Naive thymus-derived CD4-positive, alpha-beta T cell (primary cell): ENCODE measurements at regions of chr7 and their contacts with region 1.

Region 1: DNA sequence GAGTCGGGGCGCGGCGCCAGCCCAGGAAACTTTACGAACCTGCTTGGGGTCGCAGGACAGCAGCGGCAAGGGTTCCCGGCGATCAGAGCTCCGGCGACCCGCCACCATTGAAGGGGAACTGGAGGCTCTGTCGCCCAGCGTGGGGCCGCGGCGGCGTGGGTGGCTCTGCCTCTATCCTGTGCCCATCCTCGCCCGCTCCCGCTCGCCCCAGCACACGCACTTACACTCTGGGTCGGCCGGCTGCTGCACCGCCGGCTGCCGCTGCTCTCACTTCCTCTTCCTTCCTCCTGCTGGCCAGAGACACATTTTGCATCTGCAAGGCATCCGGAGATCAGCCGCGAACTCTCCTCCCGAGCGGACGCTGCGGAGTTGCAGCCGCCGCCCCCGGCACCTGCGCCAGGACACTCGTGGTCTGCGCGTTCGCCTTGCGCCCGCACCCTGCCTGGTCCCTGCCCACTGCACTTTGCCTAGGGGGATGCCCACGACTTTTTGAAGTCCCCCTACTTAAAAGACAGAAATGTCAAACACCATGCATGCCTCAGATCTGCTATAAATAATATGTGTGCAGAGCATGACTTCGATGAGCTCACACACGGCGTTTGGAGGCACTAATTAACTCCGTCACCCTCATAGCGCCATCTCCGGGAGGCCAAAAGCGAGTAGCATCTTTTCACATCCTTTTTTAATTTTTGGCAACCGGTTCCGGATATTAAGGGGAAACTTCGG is at the start of gene ELMO1:
- DNase-seq: peak; percentile 63 to 87 (median 86)
- ATAC-seq: peak; percentile 83
- H3K4me3 ChIP-seq: peak within 1 kb of the TSS; percentile 83
- H3K4me3 Mint-ChIP-seq: peak within 1 kb of the TSS; percentile 94 to 99 (median 97)
- H3K27ac ChIP-seq: peak within 1 kb of the TSS; percentile 89
- H3K27ac Mint-ChIP-seq: peak within 1 kb of the TSS; percentile 97 to 100 (median 99)
- H3K4me1 ChIP-seq: peaks cover 8 to 29% of the 10 kb centered on the region in 2 donors
- H3K4me1 Mint-ChIP-seq: peaks cover 21 to 62% (median 54%) of the 10 kb centered on the region in 7 donors
- H3K27me3 ChIP-seq: no peaks in the 10 kb centered on the region
- H3K27me3 Mint-ChIP-seq: peaks cover 0 to 10% (median 0%) of the 10 kb centered on the region in 5 donors
- total RNA-seq, gene ELMO1: 119 to 160 (median 126) TPM

Region 2: DNA sequence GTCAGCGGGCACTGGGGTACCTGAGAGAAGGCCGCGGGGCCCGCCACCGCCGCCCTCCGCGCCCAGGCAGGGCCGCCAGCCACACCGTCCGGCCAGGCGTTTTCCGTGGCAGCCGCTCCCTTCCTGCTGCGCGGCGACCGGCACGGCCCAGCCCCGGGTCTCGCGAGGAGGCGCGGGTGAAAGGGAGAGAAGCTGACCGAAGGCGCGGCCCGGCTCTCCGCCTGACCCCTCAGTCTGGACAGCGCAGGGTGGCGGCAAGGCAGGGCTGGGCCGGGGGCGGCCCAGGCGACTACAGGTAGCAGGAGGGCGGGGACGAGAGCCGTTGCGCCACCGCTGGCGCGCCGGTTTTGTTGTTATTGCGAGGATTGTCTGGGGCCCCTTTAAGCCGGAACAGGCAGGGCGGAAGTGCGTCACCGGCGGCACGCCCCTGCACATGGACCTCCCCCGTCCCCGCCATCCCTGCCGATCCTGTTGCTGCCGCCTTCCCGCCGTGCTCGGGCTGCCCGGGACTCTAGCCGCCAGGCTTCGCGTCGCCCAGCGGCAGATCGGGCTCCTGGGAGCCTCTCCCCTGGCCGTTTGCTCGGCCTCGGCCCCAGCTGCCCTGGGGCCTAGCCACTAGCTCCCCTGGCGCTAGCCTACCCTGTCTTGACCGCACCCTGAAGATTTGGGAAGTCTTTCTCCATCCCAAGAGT is 1753.9 kb before region 1 on chr7 and contains the start of gene HERPUD2:
- CTCF ChIA-PET with region 1: no interaction called
- POLR2A ChIA-PET with region 1: interaction called, 3 read pairs
- intact Hi-C with region 1: loop called in 1 of 2 experiments (anchors 1 kb)
- DNase-seq: peak; percentile 89 to 94 (median 93)
- ATAC-seq: peak; percentile 92
- H3K4me3 ChIP-seq: peak within 1 kb of the TSS; percentile 92
- H3K4me3 Mint-ChIP-seq: peak within 1 kb of the TSS; percentile 88 to 99 (median 97)
- H3K27ac ChIP-seq: peak within 1 kb of the TSS; percentile 98
- H3K27ac Mint-ChIP-seq: peak within 1 kb of the TSS; percentile 93 to 100 (median 98)
- H3K4me1 ChIP-seq: peaks cover 16 to 18% of the 10 kb centered on the region in 2 donors
- H3K4me1 Mint-ChIP-seq: peaks cover 47 to 62% (median 57%) of the 10 kb centered on the region in 7 donors
- H3K27me3 ChIP-seq: no peaks in the 10 kb centered on the region
- H3K27me3 Mint-ChIP-seq: no peaks in the 10 kb centered on the region
- total RNA-seq, gene HERPUD2: 38.1 to 92.6 (median 62.4) TPM

Region 3: DNA sequence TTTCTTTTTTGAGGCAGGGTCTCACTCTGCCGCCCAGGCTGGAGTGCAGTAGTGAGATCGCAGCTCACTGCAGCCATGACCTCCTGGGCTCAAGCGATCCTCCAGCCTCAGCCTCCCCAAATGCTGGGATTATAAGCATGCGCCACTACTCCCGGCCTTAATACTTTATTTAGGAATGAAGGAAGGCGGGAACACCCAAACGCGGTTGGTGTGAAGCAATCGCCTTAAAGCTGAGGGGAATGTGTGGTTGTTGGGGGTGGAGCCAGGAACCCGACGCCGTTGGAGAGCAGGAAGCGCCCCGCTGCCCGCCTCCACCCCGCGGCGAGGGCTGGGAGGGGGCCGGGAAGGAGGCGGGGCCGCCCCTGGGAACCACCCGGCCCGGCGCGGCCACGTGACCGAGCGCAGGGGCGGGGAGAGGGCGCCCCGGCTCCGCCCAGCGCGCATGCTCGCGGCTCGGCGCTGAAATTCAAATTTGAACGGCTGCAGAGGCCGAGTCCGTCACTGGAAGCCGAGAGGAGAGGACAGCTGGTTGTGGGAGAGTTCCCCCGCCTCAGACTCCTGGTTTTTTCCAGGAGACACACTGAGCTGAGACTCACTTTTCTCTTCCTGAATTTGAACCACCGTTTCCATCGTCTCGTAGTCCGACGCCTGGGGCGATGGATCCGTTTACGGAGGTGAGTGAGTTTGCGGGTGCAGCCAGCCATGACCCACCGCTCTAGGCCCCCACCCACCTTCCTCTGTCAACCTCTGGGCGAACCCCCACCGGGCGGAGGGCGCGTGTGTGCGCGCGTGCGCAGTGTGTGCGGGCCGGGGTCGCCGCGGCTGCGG is 1059.2 kb before region 1 on chr7 and contains the start of gene ANLN:
- CTCF ChIA-PET with region 1: no interaction called
- POLR2A ChIA-PET with region 1: no interaction called
- intact Hi-C with region 1: loop called (anchors 5 to 10 kb)
- DNase-seq: peak; percentile 71 to 91 (median 82)
- ATAC-seq: peak; percentile 98
- H3K4me3 ChIP-seq: peak within 1 kb of the TSS; percentile 78
- H3K4me3 Mint-ChIP-seq: peak within 1 kb of the TSS; percentile 77 to 90 (median 85)
- H3K27ac ChIP-seq: peak within 1 kb of the TSS; percentile 67
- H3K27ac Mint-ChIP-seq: peak within 1 kb of the TSS; percentile 72 to 90 (median 81)
- H3K4me1 ChIP-seq: peaks cover 8 to 19% of the 10 kb centered on the region in 2 donors
- H3K4me1 Mint-ChIP-seq: peaks cover 12 to 39% (median 26%) of the 10 kb centered on the region in 7 donors
- H3K27me3 ChIP-seq: no peaks in the 10 kb centered on the region
- H3K27me3 Mint-ChIP-seq: peaks cover 0 to 12% (median 0%) of the 10 kb centered on the region in 5 donors
- total RNA-seq, gene ANLN: 0.35 to 48.6 (median 0.82) TPM

Region 4: GRCh38 chr7:37234928-37235327 is 213.9 kb before region 1 on chr7:
- CTCF ChIA-PET with region 1: no interaction called
- POLR2A ChIA-PET with region 1: interaction called, 3 read pairs
- intact Hi-C with region 1: loop called in 1 of 2 experiments (anchors 1 kb)
- DNase-seq: peak in 6 of 9 donors; percentile 13 to 45 (median 33)
- ATAC-seq: peak; percentile 32
- H3K4me3 ChIP-seq: no peak overlapping the region
- H3K4me3 Mint-ChIP-seq: no peak overlapping the region
- H3K27ac ChIP-seq: no peak overlapping the region
- H3K27ac Mint-ChIP-seq: peak overlapping the region in 2 of 9 donors; percentile 1 to 10
- H3K4me1 ChIP-seq: no peaks in the 10 kb centered on the region
- H3K4me1 Mint-ChIP-seq: peaks cover 12 to 33% (median 24%) of the 10 kb centered on the region in 7 donors
- H3K27me3 ChIP-seq: no peaks in the 10 kb centered on the region
- H3K27me3 Mint-ChIP-seq: no peaks in the 10 kb centered on the region

Region 5: DNA sequence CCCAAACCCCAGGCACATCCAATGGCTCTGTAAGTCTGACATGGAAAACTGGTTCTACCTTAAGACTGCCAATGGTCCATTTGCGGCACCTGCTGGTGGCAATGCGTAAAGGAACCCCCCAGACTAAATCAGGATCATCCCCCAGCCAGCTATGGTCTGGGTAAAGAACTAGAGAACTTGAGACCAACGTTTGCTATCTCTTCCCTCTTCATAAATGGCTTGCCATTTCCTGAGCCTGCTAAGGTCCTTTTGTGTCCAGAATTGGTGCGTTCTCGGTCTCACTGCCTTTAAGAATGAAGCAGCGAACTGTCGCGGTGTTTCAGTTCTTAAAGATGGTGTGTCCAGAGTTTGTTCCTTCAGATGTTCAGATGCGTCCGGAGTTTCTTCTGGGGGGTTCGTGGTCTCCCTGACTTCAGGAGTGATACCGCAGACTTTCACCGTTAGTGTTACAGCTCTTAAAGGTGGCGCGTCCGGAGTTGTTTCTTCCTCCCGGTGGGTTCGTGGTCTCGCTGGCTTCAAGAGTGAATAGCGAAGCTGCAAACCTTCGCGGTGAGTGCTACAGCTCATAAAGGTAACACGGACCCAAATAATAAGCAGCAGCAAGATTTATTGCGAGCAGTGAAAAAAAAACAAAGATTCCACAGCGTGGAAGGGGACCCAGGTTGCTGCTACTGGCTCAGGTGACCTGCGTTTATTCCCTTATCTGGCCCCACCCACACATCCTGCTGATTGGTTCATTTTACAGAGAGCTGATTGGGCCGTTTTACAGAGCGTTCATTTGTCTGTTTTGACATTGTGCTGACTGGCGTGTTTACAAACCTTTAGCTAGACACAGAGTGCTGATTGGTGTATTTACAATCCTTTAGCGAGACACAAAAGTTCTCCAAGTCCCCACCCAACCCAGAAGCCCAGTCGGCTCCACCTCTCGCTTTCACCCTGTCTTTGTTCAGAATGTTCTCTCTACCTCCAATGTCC is 95.5 kb before region 1 on chr7:
- CTCF ChIA-PET with region 1: interaction called, 43 read pairs
- POLR2A ChIA-PET with region 1: interaction called, 84 read pairs
- intact Hi-C with region 1: loop called (anchors 1 kb)
- DNase-seq: peak; percentile 37 to 90 (median 82)
- ATAC-seq: peak; percentile 91
- H3K4me3 ChIP-seq: peak overlapping the region; percentile 93
- H3K4me3 Mint-ChIP-seq: peak overlapping the region; percentile 84 to 98 (median 95)
- H3K27ac ChIP-seq: peak overlapping the region; percentile 75
- H3K27ac Mint-ChIP-seq: peak overlapping the region; percentile 86 to 97 (median 92)
- H3K4me1 ChIP-seq: peaks cover 15 to 44% of the 10 kb centered on the region in 2 donors
- H3K4me1 Mint-ChIP-seq: peaks cover 71 to 97% (median 93%) of the 10 kb centered on the region in 7 donors
- H3K27me3 ChIP-seq: no peaks in the 10 kb centered on the region
- H3K27me3 Mint-ChIP-seq: no peaks in the 10 kb centered on the region

Region 6: GRCh38 chr7:37433166-37433565 is 15.6 kb before region 1 on chr7:
- CTCF ChIA-PET with region 1: interaction called, 5 read pairs
- POLR2A ChIA-PET with region 1: interaction called, 37 read pairs
- intact Hi-C with region 1: loop called in 1 of 2 experiments (anchors 1 kb)
- DNase-seq: no peak
- ATAC-seq: peak; percentile 49
- H3K4me3 ChIP-seq: no peak overlapping the region
- H3K4me3 Mint-ChIP-seq: peak overlapping the region in 8 of 10 donors; percentile 30 to 69 (median 64)
- H3K27ac ChIP-seq: no peak overlapping the region
- H3K27ac Mint-ChIP-seq: peak overlapping the region in 8 of 9 donors; percentile 19 to 87 (median 64)
- H3K4me1 ChIP-seq: peaks cover 12 to 35% of the 10 kb centered on the region in 2 donors
- H3K4me1 Mint-ChIP-seq: peaks cover 54 to 92% (median 81%) of the 10 kb centered on the region in 7 donors
- H3K27me3 ChIP-seq: no peaks in the 10 kb centered on the region
- H3K27me3 Mint-ChIP-seq: no peaks in the 10 kb centered on the region

Region 7: DNA sequence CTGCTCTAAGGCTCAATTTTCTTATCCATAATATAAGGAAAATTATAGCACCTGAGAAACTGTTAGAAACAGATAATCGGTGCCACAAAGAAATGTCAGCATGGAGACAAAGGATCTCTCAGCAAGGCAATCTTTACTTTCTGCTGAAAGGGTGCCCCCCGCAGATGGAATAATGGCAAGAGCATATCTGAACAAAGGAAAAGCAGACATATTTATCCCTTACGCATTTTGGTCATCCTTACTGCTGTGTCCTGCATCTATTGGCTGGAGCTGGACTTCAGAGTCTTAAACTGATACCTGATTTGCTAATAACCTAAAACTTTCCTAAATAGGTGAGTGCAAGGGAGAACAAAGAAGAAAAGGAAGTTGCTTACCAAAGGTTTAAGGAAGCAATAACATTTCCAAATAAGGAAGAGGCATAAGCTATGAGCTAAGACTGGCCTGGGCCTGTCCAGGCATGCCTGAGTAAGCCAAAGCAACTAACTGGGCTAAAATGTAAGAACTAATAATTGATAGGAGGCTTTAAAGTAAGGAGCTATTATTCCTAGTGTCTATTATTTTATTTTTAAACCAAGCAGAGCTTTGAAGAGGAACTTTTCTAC is 39.5 kb after region 1 on chr7:
- CTCF ChIA-PET with region 1: no interaction called
- POLR2A ChIA-PET with region 1: no interaction called
- intact Hi-C with region 1: no loop called
- DNase-seq: no peak
- ATAC-seq: no peak
- H3K4me3 ChIP-seq: no peak overlapping the region
- H3K4me3 Mint-ChIP-seq: no peak overlapping the region
- H3K27ac ChIP-seq: no peak overlapping the region
- H3K27ac Mint-ChIP-seq: peak overlapping the region in 1 of 9 donors; percentile 50
- H3K4me1 ChIP-seq: no peaks in the 10 kb centered on the region
- H3K4me1 Mint-ChIP-seq: peaks cover 0 to 4% (median 0%) of the 10 kb centered on the region in 7 donors
- H3K27me3 ChIP-seq: no peaks in the 10 kb centered on the region
- H3K27me3 Mint-ChIP-seq: peaks cover 0 to 6% (median 0%) of the 10 kb centered on the region in 5 donors

Region 8: GRCh38 chr7:37592366-37592765 is 143.6 kb after region 1 on chr7:
- CTCF ChIA-PET with region 1: no interaction called
- POLR2A ChIA-PET with region 1: no interaction called
- intact Hi-C with region 1: no loop called
- DNase-seq: no peak
- ATAC-seq: no peak
- H3K4me3 ChIP-seq: no peak overlapping the region
- H3K4me3 Mint-ChIP-seq: no peak overlapping the region
- H3K27ac ChIP-seq: no peak overlapping the region
- H3K27ac Mint-ChIP-seq: no peak overlapping the region
- H3K4me1 ChIP-seq: no peaks in the 10 kb centered on the region
- H3K4me1 Mint-ChIP-seq: no peaks in the 10 kb centered on the region
- H3K27me3 ChIP-seq: no peaks in the 10 kb centered on the region
- H3K27me3 Mint-ChIP-seq: peaks cover 24 to 44% (median 33%) of the 10 kb centered on the region in 5 donors

Region 9: DNA sequence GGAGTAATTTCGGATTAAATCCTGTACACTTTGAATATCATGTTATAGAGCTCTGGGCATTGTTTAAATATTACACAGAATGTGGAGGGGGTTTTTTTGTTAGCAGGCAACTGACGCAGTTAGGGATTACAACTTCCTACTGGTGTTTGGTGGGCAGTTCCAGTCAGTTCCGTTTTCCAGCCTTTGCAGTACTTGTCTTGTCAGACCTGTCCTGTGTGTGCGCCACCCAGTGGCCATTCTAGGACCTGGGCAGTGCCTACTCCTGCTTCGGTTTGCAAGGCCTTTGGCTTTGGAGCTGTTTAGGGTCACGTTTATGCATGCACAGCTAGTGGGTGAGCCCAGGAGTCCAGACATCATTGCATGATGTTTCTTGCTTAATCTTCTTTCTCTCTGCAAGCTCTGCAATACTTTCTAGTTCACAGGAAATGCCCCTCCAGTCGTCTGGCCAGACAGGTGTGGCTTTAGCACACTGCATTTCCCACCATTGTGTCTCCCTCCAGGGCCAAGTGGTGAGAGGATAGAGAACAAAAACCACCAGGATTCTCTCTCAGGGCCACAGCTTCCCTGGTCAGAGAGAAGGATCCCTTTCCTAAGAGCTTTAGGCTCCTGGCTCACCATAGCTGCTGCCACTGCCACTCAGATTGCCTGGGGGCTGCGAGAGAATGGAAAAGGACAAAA is 921.2 kb after region 1 on chr7:
- CTCF ChIA-PET with region 1: no interaction called
- POLR2A ChIA-PET with region 1: no interaction called
- intact Hi-C with region 1: loop called in 1 of 2 experiments (anchors 5 kb)
- DNase-seq: peak; percentile 39 to 79 (median 63)
- ATAC-seq: peak; percentile 89
- H3K4me3 ChIP-seq: no peak overlapping the region
- H3K4me3 Mint-ChIP-seq: peak overlapping the region; percentile 9 to 64 (median 56)
- H3K27ac ChIP-seq: peak overlapping the region; percentile 64
- H3K27ac Mint-ChIP-seq: peak overlapping the region in 8 of 9 donors; percentile 85 to 97 (median 92)
- H3K4me1 ChIP-seq: peaks cover 47% of the 10 kb centered on the region in 2 donors
- H3K4me1 Mint-ChIP-seq: peaks cover 33 to 79% (median 69%) of the 10 kb centered on the region in 7 donors
- H3K27me3 ChIP-seq: no peaks in the 10 kb centered on the region
- H3K27me3 Mint-ChIP-seq: no peaks in the 10 kb centered on the region